Endothelial cell of umbilical vein (primary cell): ENCODE measurements at regions of chr18 and their contacts with region 1.

Region 1: DNA sequence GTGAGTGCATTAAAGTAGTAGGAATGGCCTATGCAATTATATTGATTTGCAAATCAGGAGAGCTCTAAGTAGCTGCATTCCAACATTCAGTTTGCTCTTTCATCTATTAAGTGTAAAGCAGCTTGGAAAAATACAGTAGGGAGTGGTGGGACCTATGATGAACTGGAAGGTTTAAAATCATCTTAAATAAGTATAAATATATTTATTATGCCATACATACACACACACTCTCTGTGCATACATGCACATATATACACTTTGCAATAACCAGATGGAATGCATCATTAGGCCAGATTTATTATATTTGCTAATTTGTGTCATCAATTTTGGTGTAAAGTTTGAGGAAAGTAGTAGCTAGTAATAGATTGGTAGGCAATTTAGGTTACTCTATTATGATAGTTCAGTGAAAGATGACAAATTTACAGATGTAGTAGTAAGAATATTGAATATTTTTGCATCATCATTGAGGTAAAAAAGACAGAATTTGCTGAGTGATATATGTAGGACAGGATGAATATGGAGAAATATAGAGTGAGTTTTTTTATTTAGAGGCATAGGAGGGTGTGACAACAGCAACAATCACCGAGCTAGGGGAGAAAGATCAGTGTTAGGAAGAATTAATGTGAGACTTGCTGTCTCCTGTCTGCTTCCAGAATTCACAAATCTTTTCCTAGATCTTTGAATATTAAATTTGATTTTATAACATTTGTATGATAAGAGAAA is 961.0 kb upstream of the CDH2 start:
- DNase-seq: no peak
- H3K4me3 ChIP-seq: no peak overlapping the region
- H3K27ac ChIP-seq: no peak overlapping the region
- H3K4me1 ChIP-seq: no peaks in the 10 kb centered on the region
- H3K27me3 ChIP-seq: no peaks in the 10 kb centered on the region
- CTCF ChIP-seq: no peak
- POLR2A ChIP-seq: no peak

Region 2: DNA sequence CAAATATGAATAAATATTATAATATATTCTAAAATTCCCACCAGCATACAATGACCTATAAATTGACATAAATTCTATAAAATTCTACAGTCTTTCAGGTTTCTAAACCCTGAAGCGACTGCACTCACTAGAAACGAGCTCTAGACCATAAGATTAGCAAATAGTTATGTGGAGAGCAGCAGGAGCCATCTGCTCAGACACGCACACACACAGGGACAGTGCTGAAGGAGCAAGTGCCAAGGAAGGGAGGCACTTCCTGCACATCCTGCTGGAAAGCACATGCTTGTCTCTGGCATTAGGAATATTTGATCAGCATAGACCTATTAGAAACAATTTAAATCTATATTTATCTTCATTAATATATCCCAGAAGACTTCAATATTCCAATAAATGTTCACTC is 247.1 kb before region 1 on chr18:
- CTCF ChIA-PET with region 1: no interaction called
- POLR2A ChIA-PET with region 1: no interaction called
- dilution Hi-C with region 1: no loop called
- intact Hi-C with region 1: no loop called
- DNase-seq: peak; percentile 6
- H3K4me3 ChIP-seq: no peak overlapping the region
- H3K27ac ChIP-seq: no peak overlapping the region
- H3K4me1 ChIP-seq: no peaks in the 10 kb centered on the region
- H3K27me3 ChIP-seq: no peaks in the 10 kb centered on the region
- CTCF ChIP-seq: no peak
- POLR2A ChIP-seq: no peak

Region 3: DNA sequence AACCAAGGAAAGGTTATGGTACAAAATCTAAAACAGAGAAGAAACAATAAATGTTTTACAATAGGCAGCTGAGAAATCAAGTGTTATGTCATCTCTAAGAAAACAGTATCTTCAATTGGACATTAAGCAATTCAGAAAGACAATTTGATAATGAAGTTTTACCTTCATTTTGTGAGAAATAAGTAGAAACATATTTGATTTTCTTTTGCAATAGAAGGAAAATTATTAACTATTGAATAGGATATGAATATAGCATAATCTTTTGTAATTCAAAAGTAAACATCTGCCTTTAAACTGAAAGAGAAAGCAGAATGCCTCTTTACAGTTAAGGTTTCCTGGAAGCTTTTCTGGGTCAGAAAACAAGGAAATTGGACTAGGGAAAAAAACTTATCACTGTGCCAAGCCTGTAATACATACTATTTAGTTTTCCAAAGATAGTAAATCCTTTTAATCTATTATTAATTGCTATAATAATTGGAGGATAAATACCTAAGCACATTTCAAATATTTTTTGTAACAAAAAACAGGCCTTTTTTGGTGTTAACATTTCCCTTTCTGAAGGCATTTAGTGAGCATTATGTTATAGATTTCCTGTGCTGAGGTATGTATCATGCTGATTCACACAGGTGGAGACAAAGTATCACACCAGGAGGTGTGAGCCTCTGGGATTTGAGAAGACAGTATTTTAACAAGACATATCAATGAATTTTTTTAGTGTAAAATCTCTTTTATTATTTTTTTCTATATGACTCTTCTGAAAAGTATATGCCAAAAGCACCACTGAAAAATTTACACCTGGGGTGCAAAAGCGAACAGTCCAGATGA is 14.0 kb before region 1 on chr18:
- CTCF ChIA-PET with region 1: interaction called, 11 read pairs
- POLR2A ChIA-PET with region 1: no interaction called
- dilution Hi-C with region 1: no loop called
- intact Hi-C with region 1: no loop called
- DNase-seq: peak; percentile 50
- H3K4me3 ChIP-seq: no peak overlapping the region
- H3K27ac ChIP-seq: no peak overlapping the region
- H3K4me1 ChIP-seq: peaks cover 2% of the 10 kb centered on the region
- H3K27me3 ChIP-seq: no peaks in the 10 kb centered on the region
- CTCF ChIP-seq: no peak
- POLR2A ChIP-seq: no peak